T-cell (primary cell): ENCODE measurements at regions of chr6 and their contacts with region 1.

Region 1: GRCh38 chr6:17610835-17611234 is 10.7 kb downstream of the FAM8A1 start:
- DNase-seq: no peak
- ATAC-seq: no peak
- H3K4me3 ChIP-seq: no peak overlapping the region
- H3K4me3 Mint-ChIP-seq: no peak overlapping the region
- H3K27ac ChIP-seq: no peak overlapping the region
- H3K27ac Mint-ChIP-seq: peak overlapping the region in 1 of 2 donors; percentile 40
- H3K4me1 ChIP-seq: no peaks in the 10 kb centered on the region
- H3K4me1 Mint-ChIP-seq: peaks cover 0 to 8% (median 6%) of the 10 kb centered on the region in 3 donors
- H3K27me3 ChIP-seq: no peaks in the 10 kb centered on the region
- H3K27me3 Mint-ChIP-seq: no peaks in the 10 kb centered on the region

Region 2: DNA sequence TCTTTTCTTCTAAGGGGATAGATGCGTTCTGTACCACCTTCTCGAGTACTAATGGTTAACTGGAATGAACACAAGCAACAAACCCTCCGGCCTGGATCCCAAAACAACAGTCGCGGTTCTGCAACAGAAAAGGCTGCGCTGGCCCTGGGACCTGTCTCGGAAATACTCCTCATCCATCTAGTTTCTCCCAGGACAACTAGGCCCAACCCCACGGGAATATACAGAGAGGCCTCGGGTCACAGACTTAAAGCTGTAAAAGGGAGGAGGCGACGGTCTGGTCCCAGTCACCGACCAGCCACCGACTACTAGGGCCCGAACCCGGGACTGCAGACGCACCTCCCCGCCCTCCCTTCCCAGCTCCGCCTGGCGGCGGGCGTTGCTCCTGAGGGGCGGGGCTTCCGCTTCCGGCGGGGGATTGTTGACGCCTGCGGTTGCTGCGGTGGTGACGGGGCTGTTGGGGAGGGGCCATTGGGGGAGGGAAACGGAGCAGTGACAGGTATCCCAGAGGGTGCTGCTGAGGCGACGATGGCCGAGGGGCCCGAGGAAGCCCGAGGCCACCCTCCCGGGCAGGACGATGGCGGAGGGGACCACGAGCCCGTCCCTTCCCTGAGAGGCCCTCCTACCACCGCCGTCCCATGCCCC is 10.8 kb before region 1 on chr6 and contains the start of gene FAM8A1:
- CTCF ChIA-PET with region 1: interaction called in 1 of 2 experiments, 14 read pairs
- POLR2A ChIA-PET with region 1: interaction called, 5 to 15 read pairs
- DNase-seq: peak; percentile 89 to 97 (median 95)
- ATAC-seq: peak; percentile 88 to 92 (median 90)
- H3K4me3 ChIP-seq: peak within 1 kb of the TSS; percentile 58 to 82
- H3K4me3 Mint-ChIP-seq: peak within 1 kb of the TSS; percentile 85 to 95 (median 86)
- H3K27ac ChIP-seq: peak within 1 kb of the TSS; percentile 77
- H3K27ac Mint-ChIP-seq: peak within 1 kb of the TSS; percentile 84 to 87
- H3K4me1 ChIP-seq: peaks cover 21 to 25% of the 10 kb centered on the region in 2 experiments
- H3K4me1 Mint-ChIP-seq: peaks cover 38 to 47% (median 44%) of the 10 kb centered on the region in 3 donors
- H3K27me3 ChIP-seq: no peaks in the 10 kb centered on the region
- H3K27me3 Mint-ChIP-seq: no peaks in the 10 kb centered on the region
- total RNA-seq, gene FAM8A1: 16.1 to 21.8 (median 16.7) TPM

Region 3: DNA sequence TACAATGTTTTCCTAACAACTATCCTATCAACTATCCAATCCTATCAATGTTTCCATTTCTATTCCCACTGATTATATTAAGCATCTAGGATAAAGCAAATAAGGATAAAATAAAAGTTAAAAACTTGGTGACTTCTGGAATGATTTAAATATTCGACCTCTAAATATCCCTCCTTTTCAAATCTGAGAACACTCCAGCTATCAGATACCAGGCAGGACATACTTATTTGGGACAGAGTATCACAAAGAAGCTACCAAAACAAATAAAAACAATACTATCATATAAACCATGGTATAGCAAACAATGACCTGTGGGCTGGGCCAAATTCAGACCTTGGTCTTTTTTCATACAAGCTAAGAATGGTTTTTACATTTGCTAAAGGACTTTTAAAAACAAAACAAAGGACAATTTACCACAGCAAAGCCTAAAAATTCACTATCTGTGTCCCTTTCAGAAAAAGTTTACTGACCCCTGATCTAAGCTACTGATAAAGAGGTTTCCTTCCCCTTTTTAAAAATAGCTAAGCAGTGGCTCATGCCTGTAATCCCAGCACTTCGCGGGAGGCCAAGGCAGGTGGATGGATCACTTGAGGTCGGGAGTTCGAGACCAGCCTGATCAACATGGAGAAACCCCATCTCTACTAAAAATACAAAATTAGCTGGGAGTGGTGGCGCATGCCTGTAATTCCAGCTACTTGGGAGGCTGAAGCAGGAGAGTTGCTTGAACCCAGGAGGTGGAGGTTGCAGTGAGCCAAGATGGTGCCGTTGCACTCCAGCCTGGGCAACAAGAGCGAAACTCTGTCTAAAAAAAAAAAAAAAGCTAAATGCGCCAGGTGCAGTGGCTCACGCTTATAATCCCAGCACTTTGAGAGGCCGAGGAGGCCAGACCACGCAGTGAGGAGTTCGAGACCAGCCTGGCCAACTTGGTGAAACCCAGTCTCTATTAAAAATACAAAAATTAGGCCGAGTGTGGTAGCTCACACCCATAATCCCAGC is 89.9 kb after region 1 on chr6:
- CTCF ChIA-PET with region 1: interaction called in 1 of 2 experiments, 4 read pairs
- POLR2A ChIA-PET with region 1: interaction called in 1 of 2 experiments, 11 read pairs
- DNase-seq: no peak
- ATAC-seq: no peak
- H3K4me3 ChIP-seq: no peak overlapping the region
- H3K4me3 Mint-ChIP-seq: peak overlapping the region in 1 of 3 donors; percentile 82
- H3K27ac ChIP-seq: no peak overlapping the region
- H3K27ac Mint-ChIP-seq: peak overlapping the region; percentile 78 to 84
- H3K4me1 ChIP-seq: peaks cover 24 to 40% of the 10 kb centered on the region in 2 experiments
- H3K4me1 Mint-ChIP-seq: peaks cover 48 to 68% (median 65%) of the 10 kb centered on the region in 3 donors
- H3K27me3 ChIP-seq: no peaks in the 10 kb centered on the region
- H3K27me3 Mint-ChIP-seq: no peaks in the 10 kb centered on the region

Region 4: DNA sequence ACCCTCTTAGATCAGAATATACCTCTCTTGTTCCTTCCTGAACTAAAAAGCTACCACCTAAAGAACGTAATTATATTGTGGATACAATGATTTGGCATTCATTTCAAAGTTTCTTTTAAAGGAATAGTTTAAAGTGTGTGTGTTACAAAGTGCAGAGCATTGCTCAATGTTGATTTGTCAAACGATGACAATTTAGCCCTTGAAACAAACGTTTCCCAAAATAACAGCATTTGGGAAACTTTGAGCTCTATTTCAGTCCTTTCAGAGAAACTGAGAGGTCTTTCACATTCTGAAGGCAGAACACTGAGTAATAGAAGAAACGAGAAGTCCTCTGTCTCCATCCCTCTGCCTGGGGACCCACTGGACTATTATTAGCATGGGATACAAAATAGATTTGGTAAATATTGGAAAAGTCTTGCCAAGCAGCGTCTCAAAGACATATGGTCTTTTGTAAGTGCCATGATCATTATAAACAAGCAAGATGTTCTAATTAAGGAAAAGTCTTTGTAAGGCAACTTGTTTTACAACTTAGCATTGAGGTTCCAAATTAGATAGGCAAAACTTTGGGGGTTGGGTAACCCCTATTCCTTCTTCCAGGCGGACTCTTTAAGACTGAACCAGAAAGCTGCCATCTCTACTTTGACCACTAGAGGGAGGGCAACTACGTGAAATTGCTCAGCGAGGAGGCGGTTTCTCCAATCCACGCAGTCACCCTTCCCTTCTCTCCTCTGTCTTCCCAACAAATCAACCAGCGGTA is 985.1 kb after region 1 on chr6:
- CTCF ChIA-PET with region 1: interaction called in 1 of 2 experiments, 10 read pairs
- POLR2A ChIA-PET with region 1: no interaction called
- DNase-seq: peak in 19 of 35 experiments; percentile 1 to 61 (median 11)
- ATAC-seq: peak in 2 of 4 experiments; percentile 51 to 57
- H3K4me3 ChIP-seq: no peak overlapping the region
- H3K4me3 Mint-ChIP-seq: no peak overlapping the region
- H3K27ac ChIP-seq: no peak overlapping the region
- H3K27ac Mint-ChIP-seq: no peak overlapping the region
- H3K4me1 ChIP-seq: no peaks in the 10 kb centered on the region
- H3K4me1 Mint-ChIP-seq: peaks cover 2 to 7% (median 3%) of the 10 kb centered on the region in 3 donors
- H3K27me3 ChIP-seq: peaks cover 0 to 4% of the 10 kb centered on the region in 2 experiments
- H3K27me3 Mint-ChIP-seq: peaks cover 9 to 24% of the 10 kb centered on the region in 2 donors